ENCODE measurements at regions of chr9 and their contacts with region 1.

Region 1: GRCh38 chr9:97900738-97901565 is 21.3 kb downstream of the TRMO start:
- DNase-seq: peak; percentile 21
- H3K4me3 ChIP-seq: no peak overlapping the region
- H3K27ac ChIP-seq: no peak overlapping the region
- H3K27me3 ChIP-seq: no peaks in the 10 kb centered on the region
- CTCF ChIP-seq: peak; percentile 79

Region 2: GRCh38 chr9:97696803-97697601 is 203.9 kb before region 1 on chr9 and contains the start of gene XPA:
- CTCF ChIA-PET with region 1: interaction called, 21 read pairs
- POLR2A ChIA-PET with region 1: no interaction called
- DNase-seq: peak; percentile 59
- H3K4me3 ChIP-seq: peak within 1 kb of the TSS; percentile 86
- H3K27ac ChIP-seq: peak within 1 kb of the TSS; percentile 58
- H3K27me3 ChIP-seq: no peaks in the 10 kb centered on the region
- CTCF ChIP-seq: no peak
- polyA plus RNA-seq, gene XPA: 3.5 and 4.7 TPM in 2 replicates

Region 3: GRCh38 chr9:97703437-97704344 is 197.3 kb before region 1 on chr9:
- CTCF ChIA-PET with region 1: interaction called, 34 read pairs
- POLR2A ChIA-PET with region 1: no interaction called
- DNase-seq: no peak
- H3K4me3 ChIP-seq: no peak overlapping the region
- H3K27ac ChIP-seq: no peak overlapping the region
- H3K27me3 ChIP-seq: peaks cover 7% of the 10 kb centered on the region
- CTCF ChIP-seq: no peak

Region 4: DNA sequence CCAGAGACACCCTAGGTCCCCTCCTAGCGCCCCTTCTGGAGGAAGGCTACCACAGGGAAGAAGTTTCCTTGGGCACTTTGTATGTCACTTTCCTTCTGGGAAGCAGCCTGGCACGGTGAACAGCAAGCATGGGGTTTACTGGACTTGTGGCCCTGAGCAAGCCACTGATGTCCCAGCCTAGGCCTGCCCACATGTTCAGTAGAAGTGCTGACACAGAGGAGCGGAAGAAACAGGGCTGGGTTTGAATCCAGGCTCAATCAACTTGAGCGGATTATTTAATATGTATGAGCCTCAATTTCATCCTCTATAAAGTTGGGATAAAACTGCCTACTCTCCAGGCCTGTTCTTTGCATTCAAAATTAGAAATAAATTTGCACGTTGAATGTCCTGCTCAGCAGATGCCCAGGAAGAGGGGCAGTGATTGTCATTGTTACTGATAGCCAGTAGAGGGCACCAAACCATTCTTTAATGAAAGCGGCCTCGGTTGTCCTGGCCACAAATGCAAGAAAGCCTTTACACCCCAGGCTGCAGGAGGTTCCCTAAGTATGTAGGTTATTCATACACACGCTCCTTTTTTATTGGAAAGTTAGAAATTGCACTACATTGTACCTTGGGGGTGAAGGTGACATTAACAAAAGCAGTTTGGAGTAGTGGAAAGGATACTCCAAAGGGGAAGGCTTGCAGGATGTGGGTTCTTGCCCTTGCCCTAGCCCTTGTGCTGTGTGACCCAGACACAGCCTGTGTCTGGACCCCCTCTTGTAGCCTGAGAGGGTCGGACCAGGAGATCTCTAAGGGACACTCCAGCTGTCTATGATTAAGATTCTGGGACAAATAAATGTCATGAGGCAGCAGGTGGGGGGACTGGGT is 190.4 kb before region 1 on chr9:
- CTCF ChIA-PET with region 1: interaction called, 66 read pairs
- POLR2A ChIA-PET with region 1: interaction called, 3 read pairs
- DNase-seq: no peak
- H3K4me3 ChIP-seq: no peak overlapping the region
- H3K27ac ChIP-seq: no peak overlapping the region
- H3K27me3 ChIP-seq: peaks cover 7% of the 10 kb centered on the region
- CTCF ChIP-seq: peak; percentile 73

Region 5: DNA sequence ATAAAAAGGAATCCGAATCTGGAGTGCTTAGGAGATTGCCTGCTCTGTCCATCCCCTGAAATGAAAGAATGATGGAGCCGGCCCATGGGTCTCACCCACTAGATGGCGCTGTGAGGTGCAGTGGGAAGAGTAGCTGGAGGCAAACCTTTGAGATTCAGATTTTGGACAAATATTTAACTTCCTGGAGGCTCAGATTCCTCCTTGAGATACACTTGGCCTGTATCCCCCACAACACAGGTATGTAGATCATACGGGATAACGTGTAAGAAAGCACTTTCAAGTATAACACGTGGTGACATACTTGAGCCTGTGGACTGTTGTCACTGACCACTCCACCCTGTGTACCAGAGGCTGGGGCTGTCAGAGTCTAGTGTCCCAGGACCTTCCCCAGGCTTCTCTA is 10.9 kb before region 1 on chr9:
- CTCF ChIA-PET with region 1: interaction called, 78 read pairs
- POLR2A ChIA-PET with region 1: no interaction called
- DNase-seq: no peak
- H3K4me3 ChIP-seq: no peak overlapping the region
- H3K27ac ChIP-seq: no peak overlapping the region
- H3K27me3 ChIP-seq: peaks cover 9% of the 10 kb centered on the region
- CTCF ChIP-seq: peak; percentile 63

Region 6: DNA sequence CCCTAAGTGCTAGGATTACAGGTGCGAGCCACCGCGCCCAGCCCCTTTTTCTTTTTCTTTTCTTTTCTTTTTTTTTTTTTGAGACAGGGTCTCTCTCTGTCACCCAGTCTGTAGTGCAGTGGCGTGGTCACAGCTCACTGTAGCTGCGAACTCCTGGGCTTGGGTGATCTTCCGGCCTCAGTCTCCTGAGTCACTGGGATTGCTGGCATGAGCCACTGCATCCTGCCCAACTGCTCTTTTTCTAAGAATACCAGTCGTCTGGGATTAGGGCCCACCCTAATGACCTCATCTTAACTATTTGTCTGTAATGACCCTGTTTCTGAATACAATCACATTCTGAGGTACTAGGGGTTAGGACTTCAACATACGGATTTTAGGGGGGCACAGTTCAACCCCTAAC is 121.5 kb after region 1 on chr9:
- CTCF ChIA-PET with region 1: interaction called, 10 read pairs
- POLR2A ChIA-PET with region 1: no interaction called
- DNase-seq: no peak
- H3K4me3 ChIP-seq: no peak overlapping the region
- H3K27ac ChIP-seq: no peak overlapping the region
- H3K27me3 ChIP-seq: no peaks in the 10 kb centered on the region
- CTCF ChIP-seq: no peak